ENCODE measurements at regions of chr3 and their contacts with region 1.

Region 1: GRCh38 chr3:49021813-49022687 is at the start of gene NDUFAF3:
- DNase-seq: no peak
- ATAC-seq: peak; percentile 66
- H3K4me3 ChIP-seq: peak within 1 kb of the TSS; percentile 71 to 90
- H3K27ac ChIP-seq: peak within 1 kb of the TSS; percentile 97
- H3K4me1 ChIP-seq: peaks cover 26% of the 10 kb centered on the region
- H3K27me3 ChIP-seq: no peaks in the 10 kb centered on the region
- CTCF ChIP-seq: peak; percentile 92
- total RNA-seq, gene NDUFAF3: 101 TPM

Region 2: GRCh38 chr3:48621461-48621869 is 400.6 kb before region 1 on chr3 and contains the start of gene TMEM89:
- CTCF ChIA-PET with region 1: no interaction called
- POLR2A ChIA-PET with region 1: interaction called, 11 read pairs
- in situ Hi-C with region 1: no loop called
- intact Hi-C with region 1: no loop called
- DNase-seq: no peak
- ATAC-seq: no peak
- H3K4me3 ChIP-seq: no peak within 1 kb of the TSS
- H3K27ac ChIP-seq: no peak within 1 kb of the TSS
- H3K4me1 ChIP-seq: no peaks in the 10 kb centered on the region
- H3K27me3 ChIP-seq: no peaks in the 10 kb centered on the region
- CTCF ChIP-seq: no peak
- total RNA-seq, gene TMEM89: not detected